ENCODE measurements at regions of chr11 and their contacts with region 1.

Region 1: GRCh38 chr11:35391922-35392813 is 27.2 kb downstream of the SLC1A2 start:
- DNase-seq: peak; percentile 88
- ATAC-seq: peak; percentile 81
- H3K4me3 Mint-ChIP-seq: no peak overlapping the region
- H3K27ac Mint-ChIP-seq: no peak overlapping the region
- H3K4me1 Mint-ChIP-seq: peaks cover 25% of the 10 kb centered on the region
- H3K27me3 Mint-ChIP-seq: no peaks in the 10 kb centered on the region
- CTCF ChIP-seq: peak; percentile 99

Region 2: DNA sequence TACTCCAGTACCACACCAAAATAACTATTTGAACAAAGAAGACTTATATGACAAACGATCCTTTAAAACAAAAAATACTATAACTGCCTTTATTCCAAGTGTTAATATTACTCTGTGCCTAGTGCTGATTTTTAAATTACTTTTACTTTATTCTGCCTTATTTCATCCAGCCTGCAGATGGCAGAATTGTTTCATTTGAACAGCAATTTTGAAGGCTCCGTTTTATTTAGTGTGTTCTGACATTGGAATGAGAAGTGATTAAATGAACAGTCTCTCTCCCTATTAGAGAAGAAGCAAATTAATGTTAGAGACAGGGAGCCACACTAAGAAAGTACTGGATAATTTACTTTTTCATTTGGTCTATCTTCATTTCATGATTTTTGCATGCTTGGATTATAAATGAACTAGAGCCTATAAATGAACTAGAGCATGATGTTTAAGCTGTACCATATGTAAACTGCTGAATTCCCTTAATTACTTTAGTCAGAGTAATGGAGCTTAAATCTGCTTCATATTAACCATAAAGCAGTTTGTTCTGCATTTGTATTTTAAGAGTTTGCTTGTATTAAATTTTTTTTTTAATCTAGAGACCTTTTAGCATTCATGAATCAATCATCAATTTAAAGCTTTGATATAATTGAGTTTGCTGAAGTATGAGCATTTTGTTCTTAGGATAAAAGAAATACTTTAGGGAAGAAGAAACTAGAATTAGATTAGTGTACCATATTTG is 465.9 kb before region 1 on chr11:
- CTCF ChIA-PET with region 1: interaction called, 144 read pairs
- POLR2A ChIA-PET with region 1: no interaction called
- intact Hi-C with region 1: loop called (anchors 1 kb)
- DNase-seq: no peak
- ATAC-seq: peak; percentile 69
- H3K4me3 Mint-ChIP-seq: no peak overlapping the region
- H3K27ac Mint-ChIP-seq: no peak overlapping the region
- H3K4me1 Mint-ChIP-seq: peaks cover 18% of the 10 kb centered on the region
- H3K27me3 Mint-ChIP-seq: no peaks in the 10 kb centered on the region
- CTCF ChIP-seq: peak; percentile 84

Region 3: DNA sequence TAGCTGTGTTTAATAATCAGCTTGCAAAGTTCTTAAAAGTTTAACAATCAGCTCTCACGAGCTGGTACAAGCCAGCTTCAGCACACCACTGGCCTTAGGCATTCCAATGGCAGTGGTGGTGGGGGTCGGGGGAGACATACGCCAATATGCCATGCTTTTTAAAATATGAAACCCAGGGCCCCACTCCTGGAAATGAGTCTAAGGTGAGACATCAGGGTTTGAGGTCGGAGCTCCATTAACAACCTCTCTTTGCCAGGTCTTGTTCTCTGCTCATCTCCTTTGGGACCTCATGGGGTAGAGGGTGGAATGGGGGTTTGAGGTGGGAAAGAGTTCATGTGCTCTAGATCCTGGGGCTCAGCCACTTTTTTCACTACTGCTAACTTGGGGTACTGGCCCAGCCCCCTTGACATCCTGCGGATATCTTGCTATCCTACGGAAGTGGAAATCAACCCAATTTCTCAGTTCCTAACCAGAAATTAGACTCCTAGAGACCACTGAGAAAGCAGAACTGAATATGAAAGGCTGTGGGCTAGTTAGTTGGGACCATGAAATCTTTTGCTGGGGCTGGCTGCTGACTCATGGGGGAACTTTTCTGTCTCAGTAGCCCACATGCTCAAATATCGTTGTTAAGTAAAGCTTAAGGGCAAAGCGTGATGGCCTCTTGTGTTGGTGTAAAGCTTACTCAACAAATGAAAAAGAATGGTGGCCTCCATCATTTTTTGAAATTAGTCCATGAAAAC is 385.6 kb before region 1 on chr11:
- CTCF ChIA-PET with region 1: interaction called, 51 read pairs
- POLR2A ChIA-PET with region 1: no interaction called
- intact Hi-C with region 1: loop called (anchors 5 kb)
- DNase-seq: peak; percentile 77
- ATAC-seq: peak; percentile 87
- H3K4me3 Mint-ChIP-seq: no peak overlapping the region
- H3K27ac Mint-ChIP-seq: peak overlapping the region; percentile 24
- H3K4me1 Mint-ChIP-seq: peaks cover 60% of the 10 kb centered on the region
- H3K27me3 Mint-ChIP-seq: no peaks in the 10 kb centered on the region
- CTCF ChIP-seq: no peak

Region 4: DNA sequence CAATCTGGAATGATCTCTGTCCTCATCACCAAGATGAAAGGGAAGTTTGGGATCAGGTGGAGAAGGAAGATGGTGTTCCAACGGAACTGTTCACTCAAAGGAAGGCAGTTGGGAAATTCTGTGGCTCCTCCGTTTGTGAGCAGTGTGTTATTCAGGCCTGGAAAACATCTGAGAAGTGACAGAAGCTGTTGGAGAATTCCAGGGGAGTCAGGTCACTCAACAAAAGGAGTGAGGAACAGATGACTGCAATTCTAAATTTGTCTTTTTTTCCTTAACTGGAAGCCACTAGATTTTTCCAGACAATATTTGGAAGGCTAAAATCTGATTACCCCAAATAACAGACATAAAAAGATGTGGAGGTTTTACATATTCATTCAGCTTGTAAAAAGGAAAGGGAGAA is 145.4 kb before region 1 on chr11:
- CTCF ChIA-PET with region 1: interaction called, 23 read pairs
- POLR2A ChIA-PET with region 1: no interaction called
- intact Hi-C with region 1: loop called (anchors 5 kb)
- DNase-seq: no peak
- ATAC-seq: no peak
- H3K4me3 Mint-ChIP-seq: no peak overlapping the region
- H3K27ac Mint-ChIP-seq: peak overlapping the region; percentile 36
- H3K4me1 Mint-ChIP-seq: peaks cover 65% of the 10 kb centered on the region
- H3K27me3 Mint-ChIP-seq: no peaks in the 10 kb centered on the region
- CTCF ChIP-seq: no peak

Region 5: GRCh38 chr11:35404388-35404775 is 12.2 kb after region 1 on chr11:
- CTCF ChIA-PET with region 1: interaction called, 27 read pairs
- POLR2A ChIA-PET with region 1: no interaction called
- intact Hi-C with region 1: no loop called
- DNase-seq: peak; percentile 32
- ATAC-seq: no peak
- H3K4me3 Mint-ChIP-seq: no peak overlapping the region
- H3K27ac Mint-ChIP-seq: no peak overlapping the region
- H3K4me1 Mint-ChIP-seq: no peaks in the 10 kb centered on the region
- H3K27me3 Mint-ChIP-seq: peaks cover 2% of the 10 kb centered on the region
- CTCF ChIP-seq: peak; percentile 24

Region 6: GRCh38 chr11:35436581-35437250 is 44.5 kb after region 1 on chr11:
- CTCF ChIA-PET with region 1: no interaction called
- POLR2A ChIA-PET with region 1: no interaction called
- intact Hi-C with region 1: no loop called
- DNase-seq: no peak
- ATAC-seq: no peak
- H3K4me3 Mint-ChIP-seq: no peak overlapping the region
- H3K27ac Mint-ChIP-seq: no peak overlapping the region
- H3K4me1 Mint-ChIP-seq: no peaks in the 10 kb centered on the region
- H3K27me3 Mint-ChIP-seq: peaks cover 38% of the 10 kb centered on the region
- CTCF ChIP-seq: no peak

Region 7: GRCh38 chr11:35458846-35459245 is 66.7 kb after region 1 on chr11:
- CTCF ChIA-PET with region 1: no interaction called
- POLR2A ChIA-PET with region 1: no interaction called
- intact Hi-C with region 1: no loop called
- DNase-seq: no peak
- ATAC-seq: no peak
- H3K4me3 Mint-ChIP-seq: no peak overlapping the region
- H3K27ac Mint-ChIP-seq: no peak overlapping the region
- H3K4me1 Mint-ChIP-seq: no peaks in the 10 kb centered on the region
- H3K27me3 Mint-ChIP-seq: peaks cover 11% of the 10 kb centered on the region
- CTCF ChIP-seq: no peak

Region 8: GRCh38 chr11:35629914-35630313 is 237.7 kb after region 1 on chr11:
- CTCF ChIA-PET with region 1: no interaction called
- POLR2A ChIA-PET with region 1: no interaction called
- intact Hi-C with region 1: no loop called
- DNase-seq: no peak
- ATAC-seq: no peak
- H3K4me3 Mint-ChIP-seq: no peak overlapping the region
- H3K27ac Mint-ChIP-seq: no peak overlapping the region
- H3K4me1 Mint-ChIP-seq: no peaks in the 10 kb centered on the region
- H3K27me3 Mint-ChIP-seq: peaks cover 46% of the 10 kb centered on the region
- CTCF ChIP-seq: no peak